Right ventricle myocardium superior (tissue), 1 donor: ENCODE measurements at regions of chr12 and their contacts with region 1.

Region 1: DNA sequence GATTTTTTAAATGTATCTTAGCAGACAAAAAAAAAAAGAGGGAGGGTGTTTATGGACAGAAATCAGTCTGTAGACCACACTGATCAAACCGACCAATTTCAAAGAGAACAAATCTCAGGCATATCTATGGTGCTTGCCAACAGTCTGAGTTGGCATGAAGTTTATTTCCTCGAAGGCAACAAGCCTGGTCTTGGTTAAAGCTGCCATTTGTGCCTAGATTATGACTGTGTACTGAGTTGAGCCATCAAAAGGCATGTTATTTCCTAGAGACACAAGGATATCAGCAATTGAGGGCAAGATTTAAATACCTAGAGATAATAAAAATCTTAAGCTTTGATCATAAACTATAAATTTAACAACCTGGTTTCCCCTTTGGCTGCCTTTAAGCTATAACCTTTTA is 119.2 kb downstream of the SLC2A13 start:
- DNase-seq: no peak
- ATAC-seq: no peak

Region 2: GRCh38 chr12:39764944-39765560 is 221.6 kb before region 1 on chr12:
- intact Hi-C with region 1: loop called (anchors 5 kb)
- DNase-seq: no peak
- ATAC-seq: peak; percentile 62

Region 3: DNA sequence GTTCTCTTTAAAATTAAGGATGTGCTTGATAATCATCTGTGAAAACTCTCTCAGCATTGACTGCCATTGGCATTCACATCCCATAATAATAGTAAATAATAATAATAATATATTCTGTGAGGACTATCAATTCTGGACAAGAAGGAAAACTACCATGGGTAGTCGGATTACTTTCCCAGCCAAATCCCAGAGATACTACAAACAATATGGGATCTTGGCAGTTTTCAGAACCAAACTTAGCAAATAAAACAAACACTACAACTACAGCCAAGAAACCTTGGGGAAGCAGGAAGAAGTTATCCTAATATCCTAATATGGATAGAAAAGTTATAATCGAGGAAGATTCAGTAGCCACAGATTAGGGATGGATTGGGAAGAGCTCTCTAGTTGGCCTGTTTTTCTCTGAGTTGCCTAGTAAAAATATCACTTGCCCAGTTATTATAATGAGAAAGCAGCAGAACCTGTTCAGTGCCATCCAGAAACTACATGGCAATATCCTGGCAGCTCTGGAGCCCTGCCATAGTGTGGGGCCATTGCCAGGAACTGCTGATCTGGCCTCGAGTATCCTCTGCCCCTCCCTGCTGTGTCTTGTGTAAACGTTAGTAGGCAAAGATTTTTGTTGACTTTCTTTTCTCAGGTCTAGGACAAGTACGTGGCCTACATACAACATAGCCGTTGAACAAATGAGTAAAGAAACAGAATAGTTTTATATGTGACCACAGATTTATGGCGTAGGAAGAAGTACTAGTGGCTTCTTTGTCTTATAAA is 74.3 kb before region 1 on chr12:
- intact Hi-C with region 1: no loop called
- DNase-seq: peak; percentile 54
- ATAC-seq: peak; percentile 83